ENCODE measurements at regions of chr1 and their contacts with region 1.

Region 1: GRCh38 chr1:202184750-202185460 is 8.7 kb upstream of the LGR6 start:
- DNase-seq: peak; percentile 92
- ATAC-seq: peak; percentile 76
- H3K4me3 ChIP-seq: no peak overlapping the region
- H3K27ac ChIP-seq: no peak overlapping the region
- H3K4me1 ChIP-seq: no peaks in the 10 kb centered on the region
- H3K27me3 ChIP-seq: no peaks in the 10 kb centered on the region
- CTCF ChIP-seq: peak; percentile 85

Region 2: GRCh38 chr1:202063100-202063499 is 121.8 kb before region 1 on chr1:
- intact Hi-C with region 1: no loop called
- DNase-seq: no peak
- ATAC-seq: no peak
- H3K4me3 ChIP-seq: no peak overlapping the region
- H3K27ac ChIP-seq: no peak overlapping the region
- H3K4me1 ChIP-seq: no peaks in the 10 kb centered on the region
- H3K27me3 ChIP-seq: no peaks in the 10 kb centered on the region
- CTCF ChIP-seq: no peak

Region 3: DNA sequence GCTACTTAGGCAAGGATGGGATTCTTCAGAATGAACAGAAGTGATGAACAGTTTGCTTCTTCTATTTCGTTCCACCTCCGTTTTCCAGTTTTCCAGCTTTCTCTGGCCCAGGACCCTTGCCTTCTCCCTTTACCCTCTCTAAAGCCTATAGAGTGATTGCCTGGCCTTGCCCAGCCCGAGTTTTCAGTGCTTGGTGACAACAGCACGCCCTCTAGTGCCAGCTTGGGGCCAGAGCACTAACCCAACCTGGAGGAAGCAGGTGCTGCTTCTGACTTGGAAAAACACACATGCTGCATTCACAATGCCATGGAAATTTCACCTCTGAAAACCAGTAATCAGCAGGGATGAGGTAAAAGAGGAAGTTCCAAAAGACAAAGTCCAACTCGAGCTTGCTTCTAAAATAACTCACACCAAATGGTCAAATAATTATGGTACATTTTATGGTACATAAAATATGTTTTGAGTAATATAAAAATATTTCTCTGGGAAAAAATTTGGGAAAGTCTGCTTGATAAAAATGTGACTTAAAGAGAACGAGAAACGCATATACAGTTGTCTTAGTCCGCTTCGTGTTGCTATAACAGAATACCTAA is 130.8 kb after region 1 on chr1:
- intact Hi-C with region 1: loop called (anchors 5 kb)
- DNase-seq: peak; percentile 86
- ATAC-seq: peak; percentile 90
- H3K4me3 ChIP-seq: no peak overlapping the region
- H3K27ac ChIP-seq: no peak overlapping the region
- H3K4me1 ChIP-seq: peaks cover 8% of the 10 kb centered on the region
- H3K27me3 ChIP-seq: no peaks in the 10 kb centered on the region
- CTCF ChIP-seq: peak; percentile 94